Naive thymus-derived CD4-positive, alpha-beta T cell (primary cell): ENCODE measurements at regions of chr1 and their contacts with region 1.

Region 1: GRCh38 chr1:248906009-248906752 is at the start of gene PGBD2:
- DNase-seq: peak; percentile 86 to 98 (median 92)
- ATAC-seq: peak; percentile 91
- H3K4me3 ChIP-seq: peak within 1 kb of the TSS; percentile 82
- H3K4me3 Mint-ChIP-seq: peak within 1 kb of the TSS; percentile 84 to 99 (median 97)
- H3K27ac ChIP-seq: peak within 1 kb of the TSS; percentile 85
- H3K27ac Mint-ChIP-seq: peak within 1 kb of the TSS; percentile 88 to 99 (median 98)
- H3K4me1 ChIP-seq: peaks cover 9% of the 10 kb centered on the region in 2 donors
- H3K4me1 Mint-ChIP-seq: peaks cover 20 to 57% (median 44%) of the 10 kb centered on the region in 7 donors
- H3K27me3 ChIP-seq: no peaks in the 10 kb centered on the region
- H3K27me3 Mint-ChIP-seq: peaks cover 0 to 27% (median 4%) of the 10 kb centered on the region in 5 donors
- total RNA-seq, gene PGBD2: 2.9 to 19.0 (median 7.6) TPM

Region 2: DNA sequence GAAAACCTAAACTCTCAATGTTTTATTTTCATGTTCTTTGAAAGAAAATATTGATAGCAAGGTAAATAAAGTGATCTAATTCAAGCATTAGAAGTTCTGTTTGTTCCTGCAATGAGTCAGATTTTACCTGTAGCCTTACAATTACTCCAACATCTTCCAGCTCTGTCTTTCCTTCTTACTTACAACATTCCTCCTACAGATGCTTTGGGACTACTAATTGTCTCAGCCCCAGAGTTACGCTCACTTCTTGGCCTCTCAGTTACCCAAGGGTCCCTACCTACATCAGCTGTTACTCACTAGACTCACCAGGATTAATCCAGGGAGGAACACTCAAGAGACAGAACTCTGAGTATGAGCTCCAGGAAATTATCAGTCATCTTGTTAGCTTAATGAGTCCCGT is 1108.7 kb before region 1 on chr1:
- CTCF ChIA-PET with region 1: no interaction called
- POLR2A ChIA-PET with region 1: no interaction called
- intact Hi-C with region 1: no loop called
- DNase-seq: no peak
- ATAC-seq: no peak
- H3K4me3 ChIP-seq: no peak overlapping the region
- H3K4me3 Mint-ChIP-seq: no peak overlapping the region
- H3K27ac ChIP-seq: no peak overlapping the region
- H3K27ac Mint-ChIP-seq: no peak overlapping the region
- H3K4me1 ChIP-seq: no peaks in the 10 kb centered on the region
- H3K4me1 Mint-ChIP-seq: no peaks in the 10 kb centered on the region
- H3K27me3 ChIP-seq: no peaks in the 10 kb centered on the region
- H3K27me3 Mint-ChIP-seq: peaks cover 0 to 6% (median 0%) of the 10 kb centered on the region in 5 donors

Region 3: DNA sequence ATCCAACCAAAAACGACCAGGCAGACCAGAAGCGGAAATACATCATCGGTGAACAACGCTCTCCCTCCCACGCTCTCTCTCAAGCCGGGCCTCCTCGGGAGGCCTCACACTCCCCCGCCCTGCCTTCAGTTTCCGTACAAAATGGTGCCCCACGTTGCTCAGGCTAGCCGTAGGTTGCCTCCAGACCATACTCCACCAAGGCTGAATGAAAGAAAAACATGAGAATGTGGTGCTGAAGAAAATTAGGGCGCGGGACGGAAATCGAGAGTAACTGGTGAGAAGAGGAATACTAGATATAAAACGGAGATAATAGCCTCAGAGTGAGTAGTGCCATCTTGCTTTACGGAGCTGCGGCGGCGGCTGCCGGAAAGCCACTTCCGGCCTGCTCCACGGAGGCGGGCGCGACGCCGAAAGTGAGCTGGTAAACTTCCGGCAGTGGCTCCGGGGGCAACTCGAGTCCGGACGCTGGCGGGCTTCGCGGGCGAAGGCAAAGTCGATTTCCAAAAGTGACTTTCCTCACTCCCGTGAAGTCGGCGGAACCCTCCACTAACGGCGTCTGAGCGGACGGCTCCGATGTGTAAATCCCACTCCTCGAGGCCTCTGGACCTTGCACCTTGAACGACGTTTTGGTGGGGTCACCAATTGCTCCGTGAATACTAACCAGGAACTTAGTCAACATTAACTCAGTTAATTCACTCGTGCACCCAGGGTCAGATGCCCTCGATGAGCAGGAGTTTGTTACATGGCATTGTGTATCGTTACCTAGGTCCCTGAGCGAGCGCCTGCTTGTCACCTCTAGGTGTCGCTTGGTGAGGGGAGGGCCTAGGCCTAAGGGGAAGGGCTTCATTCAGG is 80.0 kb before region 1 on chr1 and contains the start of gene SH3BP5L:
- CTCF ChIA-PET with region 1: no interaction called
- POLR2A ChIA-PET with region 1: interaction called, 9 read pairs
- intact Hi-C with region 1: loop called (anchors 1 kb)
- DNase-seq: peak; percentile 78 to 96 (median 95)
- ATAC-seq: peak; percentile 92
- H3K4me3 ChIP-seq: peak within 1 kb of the TSS; percentile 89
- H3K4me3 Mint-ChIP-seq: peak within 1 kb of the TSS; percentile 92 to 99 (median 98)
- H3K27ac ChIP-seq: peak within 1 kb of the TSS; percentile 96
- H3K27ac Mint-ChIP-seq: peak within 1 kb of the TSS; percentile 95 to 100 (median 99)
- H3K4me1 ChIP-seq: peaks cover 37 to 47% of the 10 kb centered on the region in 2 donors
- H3K4me1 Mint-ChIP-seq: peaks cover 43 to 67% (median 52%) of the 10 kb centered on the region in 7 donors
- H3K27me3 ChIP-seq: no peaks in the 10 kb centered on the region
- H3K27me3 Mint-ChIP-seq: peaks cover 0 to 2% (median 0%) of the 10 kb centered on the region in 5 donors
- total RNA-seq, gene SH3BP5L: 22.5 to 51.1 (median 33.3) TPM

Region 4: GRCh38 chr1:248837794-248838356 is 68.3 kb before region 1 on chr1 and contains the start of gene ZNF672:
- CTCF ChIA-PET with region 1: interaction called, 3 read pairs
- POLR2A ChIA-PET with region 1: no interaction called
- intact Hi-C with region 1: loop called (anchors 1 kb)
- DNase-seq: peak; percentile 86 to 94 (median 92)
- ATAC-seq: peak; percentile 90
- H3K4me3 ChIP-seq: peak within 1 kb of the TSS; percentile 78
- H3K4me3 Mint-ChIP-seq: peak within 1 kb of the TSS in 2 of 10 donors; percentile 93 to 96
- H3K27ac ChIP-seq: peak within 1 kb of the TSS; percentile 94
- H3K27ac Mint-ChIP-seq: peak within 1 kb of the TSS in 6 of 9 donors; percentile 95 to 99 (median 98)
- H3K4me1 ChIP-seq: peaks cover 13 to 15% of the 10 kb centered on the region in 2 donors
- H3K4me1 Mint-ChIP-seq: peaks cover 19 to 38% (median 31%) of the 10 kb centered on the region in 7 donors
- H3K27me3 ChIP-seq: no peaks in the 10 kb centered on the region
- H3K27me3 Mint-ChIP-seq: peaks cover 0 to 8% (median 0%) of the 10 kb centered on the region in 5 donors
- total RNA-seq, gene ZNF672: 28.7 to 49.8 (median 42.7) TPM

Region 5: GRCh38 chr1:248858891-248859889 is 47.0 kb before region 1 on chr1 and contains the start of gene ZNF692:
- CTCF ChIA-PET with region 1: no interaction called
- POLR2A ChIA-PET with region 1: interaction called, 6 read pairs
- intact Hi-C with region 1: loop called (anchors 1 kb)
- DNase-seq: peak; percentile 96 to 98 (median 97)
- ATAC-seq: peak; percentile 93
- H3K4me3 ChIP-seq: peak within 1 kb of the TSS; percentile 78
- H3K4me3 Mint-ChIP-seq: peak within 1 kb of the TSS; percentile 81 to 98 (median 91)
- H3K27ac ChIP-seq: peak within 1 kb of the TSS; percentile 81
- H3K27ac Mint-ChIP-seq: peak within 1 kb of the TSS; percentile 90 to 98 (median 96)
- H3K4me1 ChIP-seq: peaks cover 39 to 50% of the 10 kb centered on the region in 2 donors
- H3K4me1 Mint-ChIP-seq: peaks cover 23 to 60% (median 51%) of the 10 kb centered on the region in 7 donors
- H3K27me3 ChIP-seq: no peaks in the 10 kb centered on the region
- H3K27me3 Mint-ChIP-seq: no peaks in the 10 kb centered on the region
- total RNA-seq, gene ZNF692: 44.5 to 87.5 (median 68.0) TPM

Region 6: GRCh38 chr1:248873409-248873992 is 32.7 kb before region 1 on chr1:
- CTCF ChIA-PET with region 1: interaction called, 4 read pairs
- POLR2A ChIA-PET with region 1: interaction called, 5 read pairs
- intact Hi-C with region 1: loop called (anchors 1 kb)
- DNase-seq: peak; percentile 80 to 99 (median 91)
- ATAC-seq: peak; percentile 84
- H3K4me3 ChIP-seq: peak overlapping the region; percentile 86
- H3K4me3 Mint-ChIP-seq: peak overlapping the region; percentile 85 to 100 (median 97)
- H3K27ac ChIP-seq: peak overlapping the region; percentile 76
- H3K27ac Mint-ChIP-seq: peak overlapping the region; percentile 91 to 100 (median 99)
- H3K4me1 ChIP-seq: no peaks in the 10 kb centered on the region
- H3K4me1 Mint-ChIP-seq: peaks cover 8 to 31% (median 23%) of the 10 kb centered on the region in 7 donors
- H3K27me3 ChIP-seq: no peaks in the 10 kb centered on the region
- H3K27me3 Mint-ChIP-seq: peaks cover 0 to 26% (median 0%) of the 10 kb centered on the region in 5 donors

Region 7: DNA sequence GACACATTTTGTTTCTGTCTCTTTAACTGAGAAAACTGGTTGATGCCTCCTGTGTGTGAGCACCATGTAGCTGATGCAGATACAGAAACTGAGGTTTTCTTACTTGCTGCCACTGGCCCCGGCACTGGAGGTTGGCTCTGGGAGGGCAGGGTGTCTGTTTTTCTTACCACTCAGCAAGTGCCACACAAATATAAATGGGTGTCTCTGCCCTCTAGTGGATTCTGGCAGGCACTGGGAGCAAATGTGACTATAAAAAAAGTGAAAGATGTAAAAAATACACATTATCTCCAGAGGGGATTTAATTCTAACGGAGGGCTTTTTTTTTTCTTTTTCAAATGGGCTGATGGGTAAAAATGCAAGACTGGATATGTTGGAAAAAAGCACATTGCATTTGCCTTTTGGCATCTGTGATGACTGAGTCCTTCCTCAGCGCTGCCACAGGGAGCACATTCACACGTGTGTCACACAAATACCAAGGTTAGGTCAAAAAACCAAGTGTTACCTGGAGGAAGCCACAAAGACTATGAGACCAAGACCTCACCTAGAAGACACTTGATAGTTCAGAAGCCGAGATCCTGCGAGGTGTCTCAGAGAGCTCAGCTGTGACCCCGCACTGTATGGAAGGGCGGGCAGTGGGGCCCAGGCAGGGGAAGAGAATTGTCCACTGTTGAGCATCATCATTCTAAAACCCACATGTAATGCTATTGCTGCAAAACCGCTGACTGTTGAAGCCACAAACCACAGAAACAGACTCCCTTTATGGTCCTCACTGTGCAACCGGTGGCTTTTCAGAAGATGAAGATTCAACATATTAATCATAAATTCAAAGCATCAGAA is 18.7 kb after region 1 on chr1:
- CTCF ChIA-PET with region 1: interaction called, 3 read pairs
- POLR2A ChIA-PET with region 1: no interaction called
- intact Hi-C with region 1: loop called in 1 of 2 experiments (anchors 1 kb)
- DNase-seq: peak in 7 of 9 donors; percentile 51 to 71 (median 63)
- ATAC-seq: peak; percentile 90
- H3K4me3 ChIP-seq: no peak overlapping the region
- H3K4me3 Mint-ChIP-seq: peak overlapping the region in 5 of 10 donors; percentile 12 to 66 (median 42)
- H3K27ac ChIP-seq: no peak overlapping the region
- H3K27ac Mint-ChIP-seq: peak overlapping the region in 5 of 9 donors; percentile 13 to 69 (median 21)
- H3K4me1 ChIP-seq: peaks cover 0 to 7% of the 10 kb centered on the region in 2 donors
- H3K4me1 Mint-ChIP-seq: peaks cover 7 to 35% (median 8%) of the 10 kb centered on the region in 7 donors
- H3K27me3 ChIP-seq: no peaks in the 10 kb centered on the region
- H3K27me3 Mint-ChIP-seq: peaks cover 0 to 15% (median 5%) of the 10 kb centered on the region in 5 donors